Activated naive CD4-positive, alpha-beta T cell treated with anti-CD3 and anti-CD28 coated beads for 36 hours (primary cell): ENCODE measurements at regions of chr11 and their contacts with region 1.

Region 1: DNA sequence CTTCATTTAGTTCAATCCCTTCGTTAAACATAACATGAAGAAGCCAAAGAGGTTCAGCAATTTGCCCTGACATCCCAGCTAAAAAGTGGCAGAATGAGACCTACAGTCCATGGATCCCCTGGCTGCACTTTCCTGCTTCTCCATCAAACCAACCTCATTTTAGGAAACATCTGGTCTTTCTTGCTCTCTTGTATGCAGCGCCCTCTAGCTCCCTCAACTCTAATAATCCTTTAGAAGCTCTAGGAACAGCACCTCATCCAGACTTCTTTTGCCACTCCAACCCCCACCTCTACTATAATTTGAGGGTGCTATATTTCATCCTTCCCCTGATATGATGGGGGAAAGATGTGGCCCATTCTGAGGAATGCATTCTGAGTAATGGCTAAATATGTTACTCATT is 7.4 kb downstream of the CNTF start:
- DNase-seq: peak; percentile 51
- H3K4me3 Mint-ChIP-seq: no peak overlapping the region
- H3K27ac Mint-ChIP-seq: no peak overlapping the region
- H3K4me1 Mint-ChIP-seq: peaks cover 7% of the 10 kb centered on the region
- H3K27me3 Mint-ChIP-seq: no peaks in the 10 kb centered on the region

Region 2: DNA sequence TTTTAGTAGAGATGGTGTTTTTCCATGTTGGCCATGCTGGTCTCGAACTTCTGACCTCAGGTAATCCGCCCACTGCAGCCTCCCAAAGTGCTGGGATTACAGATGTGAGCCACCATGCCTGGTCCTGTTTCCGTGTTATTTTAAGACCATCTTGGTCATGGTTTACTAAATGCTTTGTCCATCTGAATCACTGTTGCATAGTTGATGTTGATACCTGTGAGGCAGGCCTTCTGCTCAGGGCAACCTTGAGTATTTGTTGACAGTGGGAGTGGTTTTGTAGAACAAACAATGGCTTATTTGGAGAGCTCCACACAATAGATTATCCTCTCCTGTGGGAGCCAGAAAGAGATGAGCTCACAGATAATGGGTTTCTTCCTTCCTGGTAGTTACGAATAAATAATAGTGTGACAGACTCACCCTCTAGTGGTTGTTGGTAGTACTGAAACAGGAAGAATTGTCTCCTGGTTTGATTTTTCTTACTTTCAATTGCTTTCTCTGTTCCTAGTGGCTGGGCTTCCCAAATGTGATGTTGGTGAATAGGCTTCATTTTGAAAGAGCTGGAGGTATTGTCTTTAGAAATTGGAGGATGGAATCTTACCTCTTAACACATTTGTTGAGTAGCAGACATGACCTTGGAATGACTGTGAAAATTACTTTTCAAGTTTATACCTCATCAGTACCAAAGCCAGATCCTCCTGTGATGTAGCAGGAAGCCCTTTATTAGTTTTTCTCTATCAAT is 829.2 kb before region 1 on chr11:
- CTCF ChIA-PET with region 1: no interaction called
- intact Hi-C with region 1: no loop called
- DNase-seq: peak; percentile 12
- H3K4me3 Mint-ChIP-seq: no peak overlapping the region
- H3K27ac Mint-ChIP-seq: peak overlapping the region; percentile 60
- H3K4me1 Mint-ChIP-seq: peaks cover 25% of the 10 kb centered on the region
- H3K27me3 Mint-ChIP-seq: no peaks in the 10 kb centered on the region

Region 3: GRCh38 chr11:58567889-58568512 is 61.9 kb before region 1 on chr11:
- CTCF ChIA-PET with region 1: interaction called, 49 read pairs
- intact Hi-C with region 1: no loop called
- DNase-seq: peak; percentile 83
- H3K4me3 Mint-ChIP-seq: peak overlapping the region; percentile 0
- H3K27ac Mint-ChIP-seq: peak overlapping the region; percentile 67
- H3K4me1 Mint-ChIP-seq: peaks cover 63% of the 10 kb centered on the region
- H3K27me3 Mint-ChIP-seq: no peaks in the 10 kb centered on the region

Region 4: GRCh38 chr11:58617976-58618557 is 11.8 kb before region 1 on chr11:
- CTCF ChIA-PET with region 1: interaction called, 15 read pairs
- intact Hi-C with region 1: no loop called
- DNase-seq: peak; percentile 31
- H3K4me3 Mint-ChIP-seq: no peak overlapping the region
- H3K27ac Mint-ChIP-seq: peak overlapping the region; percentile 39
- H3K4me1 Mint-ChIP-seq: peaks cover 31% of the 10 kb centered on the region
- H3K27me3 Mint-ChIP-seq: no peaks in the 10 kb centered on the region

Region 5: GRCh38 chr11:58640386-58641023 is 10.6 kb after region 1 on chr11:
- CTCF ChIA-PET with region 1: interaction called, 39 read pairs
- intact Hi-C with region 1: no loop called
- DNase-seq: peak; percentile 10
- H3K4me3 Mint-ChIP-seq: no peak overlapping the region
- H3K27ac Mint-ChIP-seq: peak overlapping the region; percentile 20
- H3K4me1 Mint-ChIP-seq: peaks cover 20% of the 10 kb centered on the region
- H3K27me3 Mint-ChIP-seq: no peaks in the 10 kb centered on the region